Heart right ventricle (tissue), 16 donors: ENCODE measurements at regions of chr7 and their contacts with region 1.

Region 1: GRCh38 chr7:73738612-73739374 is at the start of gene ABHD11:
- DNase-seq: peak; percentile 97 to 99
- ATAC-seq: peak; percentile 92 to 98 (median 96)
- H3K4me3 ChIP-seq: peak within 1 kb of the TSS; percentile 76 to 95 (median 89)
- H3K27ac ChIP-seq: peak within 1 kb of the TSS; percentile 14 to 89 (median 86)
- H3K4me1 ChIP-seq: peaks cover 6 to 29% (median 19%) of the 10 kb centered on the region in 9 donors
- H3K27me3 ChIP-seq: no peaks in the 10 kb centered on the region
- CTCF ChIP-seq: no peak
- total RNA-seq, gene ABHD11: 20.0 to 36.8 (median 29.6) TPM

Region 2: DNA sequence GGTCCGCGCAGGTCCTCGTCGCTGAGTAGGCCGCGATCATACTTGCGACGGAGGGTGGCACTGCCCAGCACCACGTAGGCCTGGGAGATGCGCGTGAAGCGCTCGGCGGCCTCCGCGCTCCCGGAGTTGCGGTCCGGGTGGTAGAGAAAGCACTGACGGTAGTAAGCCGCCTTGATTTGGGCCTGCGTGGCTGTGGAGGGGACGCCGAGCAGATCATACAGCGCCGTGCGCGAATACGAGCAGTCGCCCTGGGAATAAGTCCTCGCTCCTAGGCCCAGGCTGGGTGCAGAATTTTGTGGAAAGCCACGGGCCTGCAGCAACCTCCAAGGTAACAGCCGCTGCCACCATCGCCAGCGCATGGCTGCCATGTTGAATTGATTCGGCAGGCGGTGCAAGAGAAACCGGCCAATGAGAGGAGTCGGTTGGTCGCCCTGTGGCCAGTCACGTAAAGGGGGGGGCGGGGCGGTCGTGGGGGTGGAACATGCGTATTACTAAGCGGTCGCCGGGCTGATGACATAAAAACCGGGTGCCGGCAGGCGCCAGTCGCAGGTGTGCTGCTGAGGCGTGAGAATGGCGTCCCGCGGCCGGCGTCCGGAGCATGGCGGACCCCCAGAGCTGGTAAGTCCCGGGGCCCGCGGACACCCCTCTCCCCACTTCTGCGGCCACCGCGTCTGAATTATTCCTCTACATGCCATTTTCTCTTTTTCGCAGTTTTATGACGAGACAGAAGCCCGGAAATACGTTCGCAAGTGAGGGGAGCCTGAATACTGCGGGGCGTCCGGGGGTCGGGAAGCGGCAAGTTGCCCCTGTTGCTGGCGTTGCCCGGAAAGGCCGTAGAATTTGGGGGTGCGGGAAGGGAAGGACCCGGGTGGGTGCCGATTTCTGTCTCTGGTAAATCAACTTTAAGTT is 55.5 kb before region 1 on chr7 and contains the starts of genes BUD23 and DNAJC30:
- intact Hi-C with region 1: loop called in 1 of 10 experiments (anchors 10 kb)
- DNase-seq: peak; percentile 97 to 98
- ATAC-seq: peak; percentile 95 to 99 (median 98)
- H3K4me3 ChIP-seq: peak within 1 kb of the TSS; percentile 85 to 99 (median 96)
- H3K27ac ChIP-seq: peak within 1 kb of the TSS in 9 of 10 donors; percentile 79 to 93 (median 87)
- H3K4me1 ChIP-seq: peaks cover 10 to 55% (median 33%) of the 10 kb centered on the region in 9 donors
- H3K27me3 ChIP-seq: no peaks in the 10 kb centered on the region
- CTCF ChIP-seq: peak in 4 of 9 donors; percentile 10 to 32 (median 14)
- total RNA-seq, gene BUD23: 63.4 to 89.9 (median 66.8) TPM
- total RNA-seq, gene DNAJC30: 12.1 to 20.8 (median 15.8) TPM

Region 3: DNA sequence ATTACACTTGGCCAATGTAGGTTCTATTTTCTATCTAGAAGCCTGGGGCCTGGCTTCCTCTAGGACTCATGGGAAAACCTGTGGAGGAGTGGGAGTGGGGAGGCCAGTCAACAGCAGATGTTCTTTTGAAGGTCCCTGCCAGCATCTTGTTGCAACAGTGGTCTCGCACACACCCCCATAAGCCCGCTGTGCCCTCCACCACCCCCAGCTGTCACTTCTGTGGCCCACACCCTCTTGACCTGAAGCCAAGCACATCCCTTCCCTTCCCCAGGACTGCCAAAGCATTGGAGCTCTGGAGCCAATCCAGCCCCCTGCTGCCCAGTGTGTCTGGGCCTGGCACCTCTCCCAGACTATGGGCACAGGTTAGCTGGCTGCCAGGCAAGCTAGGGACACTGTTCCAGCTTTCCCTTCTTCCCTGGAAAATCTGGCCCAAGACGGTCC is 17.4 kb before region 1 on chr7:
- intact Hi-C with region 1: no loop called
- DNase-seq: peak; percentile 72 to 78
- ATAC-seq: peak; percentile 21 to 89 (median 82)
- H3K4me3 ChIP-seq: no peak overlapping the region
- H3K27ac ChIP-seq: peak overlapping the region in 7 of 10 donors; percentile 15 to 63 (median 25)
- H3K4me1 ChIP-seq: peaks cover 0 to 44% (median 24%) of the 10 kb centered on the region in 9 donors
- H3K27me3 ChIP-seq: peaks cover 0 to 52% (median 6%) of the 10 kb centered on the region in 7 donors
- CTCF ChIP-seq: no peak

Region 4: DNA sequence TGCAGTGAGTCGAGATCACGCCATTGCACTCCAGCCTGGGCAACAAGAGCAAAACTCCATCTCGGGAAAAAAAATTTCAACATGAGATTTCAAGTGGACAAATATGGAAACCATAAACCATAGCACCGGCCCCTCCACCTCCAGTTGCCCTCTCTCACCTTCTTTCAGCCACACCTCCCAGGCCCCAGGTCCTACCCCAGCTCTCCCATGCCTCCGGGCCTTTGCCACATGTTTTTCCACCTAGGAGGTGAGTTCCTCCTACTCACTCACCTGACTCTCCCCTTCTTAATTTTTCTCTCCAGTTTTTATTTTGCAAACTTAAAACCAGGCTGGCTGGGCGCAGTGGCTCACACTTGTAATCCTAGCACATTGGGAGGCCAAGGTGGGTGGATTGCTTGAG is 78.3 kb after region 1 on chr7:
- intact Hi-C with region 1: no loop called
- DNase-seq: no peak
- ATAC-seq: no peak
- H3K4me3 ChIP-seq: no peak overlapping the region
- H3K27ac ChIP-seq: no peak overlapping the region
- H3K4me1 ChIP-seq: no peaks in the 10 kb centered on the region
- H3K27me3 ChIP-seq: peaks cover 0 to 11% (median 0%) of the 10 kb centered on the region in 7 donors
- CTCF ChIP-seq: no peak

Region 5: GRCh38 chr7:73842247-73842895 is 103.6 kb after region 1 on chr7 and contains the start of gene METTL27:
- intact Hi-C with region 1: loop called in 1 of 10 experiments (anchors 10 kb)
- DNase-seq: peak; percentile 92 to 94
- ATAC-seq: peak; percentile 94 to 98 (median 98)
- H3K4me3 ChIP-seq: peak within 1 kb of the TSS; percentile 36 to 81 (median 60)
- H3K27ac ChIP-seq: peak within 1 kb of the TSS in 6 of 10 donors; percentile 10 to 82 (median 67)
- H3K4me1 ChIP-seq: peaks cover 0 to 45% (median 14%) of the 10 kb centered on the region in 9 donors
- H3K27me3 ChIP-seq: peaks cover 0 to 6% (median 0%) of the 10 kb centered on the region in 7 donors
- CTCF ChIP-seq: no peak
- total RNA-seq, gene METTL27: 0.31 to 1.3 (median 0.47) TPM in 8 of 10 donors, not detected in the others